Colonic mucosa (tissue), 4 donors: ENCODE measurements at regions of chr10 and their contacts with region 1.

Region 1: DNA sequence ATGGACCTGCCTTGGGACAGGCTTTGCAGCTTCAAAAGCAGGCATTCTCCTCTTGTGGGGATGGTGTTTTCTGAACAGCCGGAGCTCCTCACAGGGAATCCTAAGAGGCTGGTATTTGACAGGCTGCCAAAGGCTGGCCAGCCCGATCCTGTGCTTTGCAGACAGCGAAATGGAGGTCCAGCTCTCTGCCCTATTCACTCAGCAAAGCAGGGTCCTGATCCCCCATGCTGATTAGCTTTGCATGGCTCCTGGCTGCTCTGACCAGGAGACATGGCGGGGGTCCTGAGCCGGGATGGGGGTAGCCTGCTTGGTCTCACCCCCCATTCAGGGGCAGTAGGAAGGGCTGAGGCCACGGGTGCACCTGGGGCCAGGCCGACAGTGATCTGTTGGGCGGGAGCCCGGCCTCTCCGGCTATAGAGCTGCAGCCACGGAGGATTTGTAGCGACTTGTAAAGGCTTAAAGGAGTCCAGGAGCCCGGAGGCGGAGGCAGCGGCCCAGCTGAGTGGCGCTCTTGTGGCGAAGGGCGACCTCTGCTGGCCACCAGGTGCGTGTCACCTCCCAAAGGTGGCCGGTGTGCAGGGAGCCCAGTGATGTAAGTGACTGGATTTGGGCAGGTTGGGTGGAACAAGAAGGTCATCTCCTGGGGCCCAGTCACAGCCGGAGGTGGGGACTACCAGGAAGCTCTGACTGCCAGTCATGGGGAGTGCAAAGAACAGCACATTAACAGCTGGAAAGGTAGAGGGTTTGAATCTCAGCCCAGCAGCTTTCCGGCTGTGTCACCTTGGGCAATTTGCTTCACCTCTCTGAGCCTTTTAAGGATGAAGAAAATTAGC is 126.5 kb downstream of the ZMIZ1 start:
- DNase-seq: peak; percentile 84
- H3K4me3 ChIP-seq: no peak overlapping the region
- H3K27ac ChIP-seq: peak overlapping the region; percentile 25
- H3K4me1 ChIP-seq: peaks cover 4% of the 10 kb centered on the region
- H3K27me3 ChIP-seq: no peaks in the 10 kb centered on the region
- CTCF ChIP-seq: peak; percentile 95

Region 2: DNA sequence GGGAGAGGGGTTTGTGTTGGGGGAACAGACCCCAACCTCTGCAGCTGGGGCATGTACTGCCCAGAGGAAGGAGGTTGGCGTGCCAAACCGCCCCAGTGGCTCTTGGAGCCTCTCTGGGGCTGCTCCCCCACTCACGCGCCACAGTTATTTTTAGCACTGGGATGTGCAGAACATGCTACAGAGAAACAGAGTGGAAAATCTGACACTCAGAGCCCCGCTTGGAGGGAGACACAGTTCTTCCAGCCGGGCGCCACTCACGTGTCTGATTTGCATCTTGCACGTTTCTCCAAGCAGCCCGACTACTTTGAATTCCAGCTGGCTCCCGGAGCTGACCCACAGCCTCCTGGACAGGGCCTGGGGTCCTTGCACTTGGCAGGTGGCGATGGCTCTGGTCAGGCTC is 979.7 kb before region 1 on chr10:
- intact Hi-C with region 1: loop called (anchors 5 kb)
- DNase-seq: peak; percentile 56
- H3K4me3 ChIP-seq: no peak overlapping the region
- H3K27ac ChIP-seq: no peak overlapping the region
- H3K4me1 ChIP-seq: no peaks in the 10 kb centered on the region
- H3K27me3 ChIP-seq: no peaks in the 10 kb centered on the region
- CTCF ChIP-seq: no peak

Region 3: GRCh38 chr10:78424719-78425118 is 770.6 kb before region 1 on chr10:
- intact Hi-C with region 1: loop called (anchors 10 kb)
- DNase-seq: no peak
- H3K4me3 ChIP-seq: no peak overlapping the region
- H3K27ac ChIP-seq: no peak overlapping the region
- H3K4me1 ChIP-seq: no peaks in the 10 kb centered on the region
- H3K27me3 ChIP-seq: no peaks in the 10 kb centered on the region
- CTCF ChIP-seq: peak; percentile 40

Region 4: GRCh38 chr10:78852466-78853240 is 342.7 kb before region 1 on chr10:
- intact Hi-C with region 1: loop called (anchors 5 kb)
- DNase-seq: peak; percentile 42
- H3K4me3 ChIP-seq: no peak overlapping the region
- H3K27ac ChIP-seq: no peak overlapping the region
- H3K4me1 ChIP-seq: no peaks in the 10 kb centered on the region
- H3K27me3 ChIP-seq: no peaks in the 10 kb centered on the region
- CTCF ChIP-seq: peak; percentile 28

Region 5: GRCh38 chr10:79069325-79070080 is 125.8 kb before region 1 on chr10:
- intact Hi-C with region 1: loop called (anchors 5 kb)
- DNase-seq: peak; percentile 50
- H3K4me3 ChIP-seq: peak overlapping the region; percentile 79
- H3K27ac ChIP-seq: peak overlapping the region; percentile 99
- H3K4me1 ChIP-seq: peaks cover 22% of the 10 kb centered on the region
- H3K27me3 ChIP-seq: no peaks in the 10 kb centered on the region
- CTCF ChIP-seq: no peak